ENCODE measurements at regions of chr4 and their contacts with region 1.

Region 1: DNA sequence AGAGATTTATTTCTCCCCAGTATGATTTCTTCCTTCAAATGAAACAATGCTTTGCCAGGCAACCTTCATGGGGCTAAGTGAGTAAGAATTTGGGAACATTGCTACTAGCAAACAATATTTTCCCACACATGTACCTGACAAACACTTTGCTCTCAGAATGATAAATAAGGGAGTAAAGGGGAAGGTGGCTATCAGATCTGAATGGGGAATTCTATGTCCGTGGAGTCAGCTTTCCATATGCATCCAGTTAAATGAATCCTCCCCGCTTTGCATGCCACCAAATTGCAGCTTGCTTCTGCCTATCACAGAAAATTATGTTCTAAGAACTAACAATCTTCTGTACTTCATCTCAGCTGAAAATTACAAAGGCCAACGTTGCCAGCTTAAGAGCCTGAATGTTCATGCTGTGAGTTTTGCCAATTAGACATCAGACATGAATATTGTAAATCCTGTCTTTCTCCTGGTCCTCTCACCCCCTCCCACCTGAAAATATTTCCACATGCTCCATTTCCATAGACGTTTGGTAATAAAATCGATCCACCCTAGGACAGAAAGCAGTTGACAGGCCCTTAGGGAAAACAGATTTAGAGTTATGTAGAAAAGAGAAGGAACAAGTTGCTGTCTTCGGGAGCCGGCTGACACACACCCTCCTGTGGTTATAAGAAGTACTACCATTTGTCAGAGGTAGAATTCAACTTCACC is 6.3 kb downstream of the MEPE start:
- DNase-seq: no peak
- ATAC-seq: peak in 2 of 4 donors; percentile 39 to 49
- H3K4me3 ChIP-seq: no peak overlapping the region
- H3K27ac ChIP-seq: peak overlapping the region in 3 of 12 donors; percentile 13 to 47 (median 34)
- H3K4me1 ChIP-seq: peaks cover 0 to 27% (median 5%) of the 10 kb centered on the region in 12 donors
- H3K27me3 ChIP-seq: no peaks in the 10 kb centered on the region
- CTCF ChIP-seq: peak; percentile 66 to 84 (median 76)
- POLR2A ChIP-seq: no peak

Region 2: GRCh38 chr4:87270144-87270543 is 568.9 kb before region 1 on chr4:
- intact Hi-C with region 1: loop called in 2 of 10 experiments (anchors 10 kb)
- DNase-seq: peak in 1 of 5 donors; percentile 11
- ATAC-seq: peak in 2 of 4 donors; percentile 48 to 49
- H3K4me3 ChIP-seq: no peak overlapping the region
- H3K27ac ChIP-seq: no peak overlapping the region
- H3K4me1 ChIP-seq: no peaks in the 10 kb centered on the region
- H3K27me3 ChIP-seq: no peaks in the 10 kb centered on the region
- CTCF ChIP-seq: peak in 11 of 12 donors; percentile 29 to 72 (median 52)
- POLR2A ChIP-seq: no peak

Region 3: DNA sequence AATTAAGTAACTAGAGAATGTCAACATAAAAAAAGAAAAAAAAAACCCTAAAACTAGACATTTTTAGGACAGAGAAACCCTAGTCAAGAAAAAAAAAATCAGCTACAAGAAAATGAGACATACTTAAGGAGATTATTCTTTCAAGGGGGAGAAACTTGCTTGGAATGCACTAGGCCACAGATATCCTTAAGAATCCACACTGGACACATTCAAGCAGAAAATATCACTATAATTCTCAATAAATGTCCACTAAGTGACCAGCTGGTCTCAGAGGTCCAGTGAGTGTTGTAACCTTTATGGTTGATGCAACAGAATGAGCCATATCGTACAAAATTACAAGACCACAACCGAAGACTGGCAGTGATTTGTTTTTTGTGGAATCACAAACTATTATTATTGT is 55.3 kb before region 1 on chr4:
- intact Hi-C with region 1: loop called in 1 of 10 experiments (anchors 10 kb)
- DNase-seq: no peak
- ATAC-seq: no peak
- H3K4me3 ChIP-seq: no peak overlapping the region
- H3K27ac ChIP-seq: no peak overlapping the region
- H3K4me1 ChIP-seq: no peaks in the 10 kb centered on the region
- H3K27me3 ChIP-seq: no peaks in the 10 kb centered on the region
- CTCF ChIP-seq: no peak
- POLR2A ChIP-seq: no peak